CD4-positive, alpha-beta memory T cell (primary cell): ENCODE measurements at regions of chr14 and their contacts with region 1.

Region 1: DNA sequence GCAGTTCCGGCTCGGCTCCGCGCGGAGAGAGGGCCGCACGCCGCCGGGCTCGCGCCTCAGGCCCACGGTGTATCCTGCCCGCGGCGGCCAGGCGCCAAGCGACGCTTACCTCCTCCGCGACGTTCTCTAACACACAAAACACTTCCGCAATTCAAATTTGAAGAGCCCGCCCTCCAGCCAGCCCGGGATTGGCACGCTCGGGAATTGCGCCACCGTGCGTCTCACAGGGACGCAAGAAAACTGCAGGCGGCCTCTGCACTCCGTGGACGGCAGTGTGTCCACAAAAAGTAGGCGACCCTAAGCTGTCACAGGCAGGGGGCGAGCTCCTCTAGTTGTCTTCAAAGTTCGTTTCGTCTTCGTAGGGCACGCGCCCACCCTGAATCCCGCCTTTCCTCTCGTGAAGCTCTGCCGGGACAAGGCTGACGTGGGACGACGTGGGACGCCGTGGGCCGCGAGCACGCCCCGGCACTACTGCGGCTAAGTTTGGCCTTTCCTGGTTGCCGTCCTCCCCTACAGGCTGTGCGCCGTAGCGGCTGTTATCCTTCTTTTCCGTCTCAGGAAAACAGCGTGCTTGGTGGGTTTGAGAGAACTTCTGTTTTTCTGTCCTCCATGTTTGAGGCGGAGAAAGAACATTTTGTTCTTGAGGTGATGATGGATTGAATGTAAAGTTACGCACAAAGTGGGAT is at the start of gene MIS18BP1:
- DNase-seq: peak; percentile 92 to 95 (median 94)
- H3K4me3 ChIP-seq: peak within 1 kb of the TSS; percentile 83 to 93
- H3K4me3 Mint-ChIP-seq: peak within 1 kb of the TSS; percentile 91 to 97 (median 94)
- H3K27ac ChIP-seq: peak within 1 kb of the TSS; percentile 71
- H3K27ac Mint-ChIP-seq: peak within 1 kb of the TSS; percentile 94 to 97 (median 96)
- H3K4me1 ChIP-seq: peaks cover 42% of the 10 kb centered on the region
- H3K4me1 Mint-ChIP-seq: peaks cover 17 to 33% (median 25%) of the 10 kb centered on the region in 4 donors
- H3K27me3 ChIP-seq: no peaks in the 10 kb centered on the region
- H3K27me3 Mint-ChIP-seq: no peaks in the 10 kb centered on the region
- total RNA-seq, gene MIS18BP1: 30.6 to 31.2 TPM

Region 2: GRCh38 chr14:44897045-44897844 is 356.0 kb before region 1 on chr14:
- CTCF ChIA-PET with region 1: interaction called, 11 read pairs
- POLR2A ChIA-PET with region 1: interaction called, 19 read pairs
- intact Hi-C with region 1: loop called (anchors 1 kb)
- DNase-seq: peak; percentile 91 to 99 (median 93)
- H3K4me3 ChIP-seq: peak overlapping the region; percentile 30 to 74
- H3K4me3 Mint-ChIP-seq: peak overlapping the region; percentile 91 to 98 (median 94)
- H3K27ac ChIP-seq: peak overlapping the region; percentile 90
- H3K27ac Mint-ChIP-seq: peak overlapping the region; percentile 83 to 99 (median 98)
- H3K4me1 ChIP-seq: peaks cover 22% of the 10 kb centered on the region
- H3K4me1 Mint-ChIP-seq: peaks cover 14 to 27% (median 21%) of the 10 kb centered on the region in 4 donors
- H3K27me3 ChIP-seq: no peaks in the 10 kb centered on the region
- H3K27me3 Mint-ChIP-seq: no peaks in the 10 kb centered on the region

Region 3: GRCh38 chr14:44912041-44912869 is 341.0 kb before region 1 on chr14:
- CTCF ChIA-PET with region 1: no interaction called
- POLR2A ChIA-PET with region 1: interaction called, 4 read pairs
- intact Hi-C with region 1: loop called (anchors 5 kb)
- DNase-seq: no peak
- H3K4me3 ChIP-seq: no peak overlapping the region
- H3K4me3 Mint-ChIP-seq: peak overlapping the region in 4 of 8 donors; percentile 26 to 46 (median 31)
- H3K27ac ChIP-seq: no peak overlapping the region
- H3K27ac Mint-ChIP-seq: no peak overlapping the region
- H3K4me1 ChIP-seq: no peaks in the 10 kb centered on the region
- H3K4me1 Mint-ChIP-seq: peaks cover 4 to 10% (median 6%) of the 10 kb centered on the region in 4 donors
- H3K27me3 ChIP-seq: peaks cover 17% of the 10 kb centered on the region
- H3K27me3 Mint-ChIP-seq: peaks cover 22 to 30% of the 10 kb centered on the region in 2 donors

Region 4: GRCh38 chr14:45015133-45015532 is 238.1 kb before region 1 on chr14:
- CTCF ChIA-PET with region 1: no interaction called
- POLR2A ChIA-PET with region 1: no interaction called
- intact Hi-C with region 1: no loop called
- DNase-seq: no peak
- H3K4me3 ChIP-seq: no peak overlapping the region
- H3K4me3 Mint-ChIP-seq: no peak overlapping the region
- H3K27ac ChIP-seq: no peak overlapping the region
- H3K27ac Mint-ChIP-seq: no peak overlapping the region
- H3K4me1 ChIP-seq: no peaks in the 10 kb centered on the region
- H3K4me1 Mint-ChIP-seq: no peaks in the 10 kb centered on the region
- H3K27me3 ChIP-seq: no peaks in the 10 kb centered on the region
- H3K27me3 Mint-ChIP-seq: no peaks in the 10 kb centered on the region

Region 5: GRCh38 chr14:45083971-45084722 is 169.1 kb before region 1 on chr14 and contains the start of gene PRPF39:
- CTCF ChIA-PET with region 1: no interaction called
- POLR2A ChIA-PET with region 1: interaction called, 3 read pairs
- intact Hi-C with region 1: loop called (anchors 1 kb)
- DNase-seq: peak; percentile 93 to 94 (median 94)
- H3K4me3 ChIP-seq: peak within 1 kb of the TSS; percentile 69 to 98
- H3K4me3 Mint-ChIP-seq: peak within 1 kb of the TSS; percentile 95 to 99 (median 97)
- H3K27ac ChIP-seq: peak within 1 kb of the TSS; percentile 86
- H3K27ac Mint-ChIP-seq: peak within 1 kb of the TSS; percentile 92 to 97 (median 95)
- H3K4me1 ChIP-seq: peaks cover 55% of the 10 kb centered on the region
- H3K4me1 Mint-ChIP-seq: peaks cover 35 to 59% (median 48%) of the 10 kb centered on the region in 4 donors
- H3K27me3 ChIP-seq: no peaks in the 10 kb centered on the region
- H3K27me3 Mint-ChIP-seq: no peaks in the 10 kb centered on the region
- total RNA-seq, gene PRPF39: 80.7 to 85.6 TPM

Region 6: GRCh38 chr14:45134051-45134958 is 118.9 kb before region 1 on chr14 and contains the start of gene FKBP3:
- CTCF ChIA-PET with region 1: interaction called, 5 read pairs
- POLR2A ChIA-PET with region 1: interaction called, 18 read pairs
- intact Hi-C with region 1: loop called (anchors 1 kb)
- DNase-seq: peak; percentile 90 to 99 (median 96)
- H3K4me3 ChIP-seq: peak within 1 kb of the TSS; percentile 91 to 97
- H3K4me3 Mint-ChIP-seq: peak within 1 kb of the TSS; percentile 89 to 100 (median 98)
- H3K27ac ChIP-seq: peak within 1 kb of the TSS; percentile 91
- H3K27ac Mint-ChIP-seq: peak within 1 kb of the TSS; percentile 91 to 99 (median 97)
- H3K4me1 ChIP-seq: peaks cover 44% of the 10 kb centered on the region
- H3K4me1 Mint-ChIP-seq: peaks cover 26 to 62% (median 45%) of the 10 kb centered on the region in 4 donors
- H3K27me3 ChIP-seq: no peaks in the 10 kb centered on the region
- H3K27me3 Mint-ChIP-seq: no peaks in the 10 kb centered on the region
- total RNA-seq, gene FKBP3: 57.0 to 64.7 TPM

Region 7: GRCh38 chr14:45169906-45170305 is 83.3 kb before region 1 on chr14:
- CTCF ChIA-PET with region 1: no interaction called
- POLR2A ChIA-PET with region 1: no interaction called
- intact Hi-C with region 1: no loop called
- DNase-seq: no peak
- H3K4me3 ChIP-seq: no peak overlapping the region
- H3K4me3 Mint-ChIP-seq: no peak overlapping the region
- H3K27ac ChIP-seq: no peak overlapping the region
- H3K27ac Mint-ChIP-seq: peak overlapping the region in 1 of 7 donors; percentile 18
- H3K4me1 ChIP-seq: no peaks in the 10 kb centered on the region
- H3K4me1 Mint-ChIP-seq: no peaks in the 10 kb centered on the region
- H3K27me3 ChIP-seq: no peaks in the 10 kb centered on the region
- H3K27me3 Mint-ChIP-seq: no peaks in the 10 kb centered on the region